Pancreas (tissue), 10 donors: ENCODE measurements at regions of chr18 and their contacts with region 1.

Region 1: DNA sequence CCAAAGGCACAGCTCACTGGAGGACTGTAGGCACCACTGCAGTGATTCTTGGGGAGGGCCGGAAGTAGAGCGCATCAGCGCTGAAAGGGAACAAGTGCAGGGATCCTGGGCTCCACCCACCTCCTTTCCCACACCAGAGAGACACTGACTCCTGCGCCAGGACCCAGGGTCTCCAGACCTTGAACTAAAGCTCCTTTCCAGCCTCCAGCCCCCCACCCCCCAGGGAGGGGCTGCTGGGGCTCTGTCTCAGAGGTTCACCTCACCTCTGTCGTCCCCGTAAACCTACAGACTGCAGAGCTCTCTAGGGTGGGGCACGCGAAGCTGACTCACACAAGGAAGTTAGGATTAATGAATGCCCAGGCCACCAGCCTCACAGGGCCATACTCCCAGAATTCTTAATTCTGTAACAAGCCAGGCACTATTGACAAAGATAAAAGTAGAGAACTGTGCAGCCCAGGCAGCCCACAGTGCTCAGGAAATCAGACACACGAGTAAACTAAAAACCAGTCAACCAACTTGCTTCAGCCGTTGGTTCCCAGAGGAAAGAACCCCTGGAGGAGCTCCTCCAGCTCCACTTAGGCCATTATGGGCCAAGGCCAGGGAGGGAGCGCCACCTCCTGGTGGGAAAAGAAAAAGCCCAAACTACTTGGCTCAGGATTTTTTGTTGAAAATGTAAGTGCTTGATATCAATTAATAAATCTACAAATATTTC is 45.1 kb upstream of the ACAA2 start:
- DNase-seq: peak; percentile 64 to 83 (median 72)
- ATAC-seq: peak; percentile 76 to 88 (median 87)
- H3K4me3 ChIP-seq: peak overlapping the region in 1 of 4 donors; percentile 0
- H3K27ac ChIP-seq: peak overlapping the region; percentile 56 to 84 (median 74)
- H3K4me1 ChIP-seq: peaks cover 13 to 23% (median 15%) of the 10 kb centered on the region in 3 donors
- H3K27me3 ChIP-seq: no peaks in the 10 kb centered on the region
- CTCF ChIP-seq: peak; percentile 71 to 85 (median 80)

Region 2: DNA sequence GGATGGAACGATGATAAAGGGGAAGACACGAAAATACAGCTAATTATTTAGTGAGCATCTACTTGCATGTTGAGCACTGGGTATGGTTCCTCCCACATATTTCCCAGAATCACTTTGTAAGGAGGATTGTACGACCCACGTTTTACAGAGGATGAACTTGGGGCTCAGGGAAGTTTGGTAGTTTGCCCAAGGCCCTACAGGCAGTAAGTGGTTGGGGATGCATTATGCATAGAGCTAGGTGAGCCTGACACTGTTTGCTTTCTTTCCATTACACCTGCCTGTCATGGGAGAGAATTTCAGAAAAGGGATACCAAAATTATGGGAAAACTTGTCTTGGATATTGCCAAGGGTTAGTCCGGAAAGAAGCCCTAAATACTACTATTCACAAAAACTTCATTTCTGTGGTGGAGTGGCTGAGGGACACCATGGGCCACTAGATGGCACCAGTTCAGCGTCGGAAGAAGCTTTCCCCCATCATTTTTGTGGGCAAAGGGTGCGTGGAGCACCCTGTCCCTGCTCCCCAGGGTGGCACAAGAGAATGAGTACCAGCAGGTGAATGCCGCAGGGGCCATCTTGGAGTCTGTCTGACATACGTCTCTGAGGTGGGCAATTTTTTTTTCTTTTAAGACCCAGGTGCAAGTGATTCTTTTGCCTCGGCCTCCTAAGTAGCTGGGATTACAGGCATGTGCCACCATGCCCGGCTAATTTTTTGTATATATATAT is 347.9 kb before region 1 on chr18:
- intact Hi-C with region 1: loop called in 2 of 3 experiments (anchors 5 to 10 kb)
- DNase-seq: peak in 3 of 6 donors; percentile 29 to 53 (median 33)
- ATAC-seq: peak; percentile 46 to 89 (median 85)
- H3K4me3 ChIP-seq: no peak overlapping the region
- H3K27ac ChIP-seq: no peak overlapping the region
- H3K4me1 ChIP-seq: no peaks in the 10 kb centered on the region
- H3K27me3 ChIP-seq: no peaks in the 10 kb centered on the region
- CTCF ChIP-seq: peak; percentile 47 to 80 (median 70)

Region 3: GRCh38 chr18:49555641-49556040 is 302.8 kb before region 1 on chr18:
- intact Hi-C with region 1: loop called in 2 of 3 experiments (anchors 5 to 10 kb)
- DNase-seq: no peak
- ATAC-seq: no peak
- H3K4me3 ChIP-seq: no peak overlapping the region
- H3K27ac ChIP-seq: no peak overlapping the region
- H3K4me1 ChIP-seq: peaks cover 0 to 8% (median 0%) of the 10 kb centered on the region in 3 donors
- H3K27me3 ChIP-seq: no peaks in the 10 kb centered on the region
- CTCF ChIP-seq: no peak

Region 4: DNA sequence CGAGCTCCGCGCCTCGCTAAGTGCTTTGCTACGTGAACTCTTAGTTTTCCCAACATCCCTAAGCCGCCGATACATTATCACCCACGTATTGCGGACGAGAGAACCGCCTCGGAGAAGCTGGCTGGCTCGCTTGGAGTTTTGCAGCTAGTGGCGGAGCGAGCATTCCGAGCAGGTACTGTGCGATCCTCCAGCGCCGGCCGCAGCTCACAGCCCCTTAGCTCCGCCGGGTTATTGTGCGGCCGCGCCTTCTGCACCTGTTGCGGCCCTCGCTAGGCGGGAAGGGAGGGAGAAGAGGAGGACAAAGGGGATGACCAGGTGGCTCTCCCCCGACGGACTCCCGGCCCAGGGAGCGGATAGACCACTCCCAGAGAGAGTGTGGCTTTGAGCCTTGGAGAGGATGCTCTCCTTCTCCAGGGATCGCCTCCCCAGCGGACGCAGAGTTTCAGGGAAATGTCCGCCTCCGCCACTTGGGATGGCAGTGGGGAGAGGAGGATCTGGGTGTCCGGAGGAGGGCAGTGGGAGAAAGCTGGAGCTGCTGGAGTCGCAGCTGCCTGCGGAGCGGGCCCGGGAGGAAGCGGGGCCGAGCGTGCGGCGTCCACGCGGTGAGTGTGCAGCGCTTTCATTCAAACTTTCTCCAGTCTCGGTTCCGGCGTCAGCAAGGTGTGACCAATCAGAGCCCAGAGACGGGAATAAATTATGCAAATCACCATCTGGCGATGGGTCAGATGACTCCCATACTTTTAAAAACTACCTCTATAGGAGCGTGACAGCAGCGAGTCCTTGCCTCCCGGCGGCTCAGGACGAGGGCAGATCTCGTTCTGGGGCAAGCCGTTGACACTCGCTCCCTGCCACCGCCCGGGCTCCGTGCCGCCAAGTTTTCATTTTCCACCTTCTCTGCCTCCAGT is 296.9 kb before region 1 on chr18 and contains the start of gene LIPG:
- intact Hi-C with region 1: loop called in 2 of 3 experiments (anchors 5 to 10 kb)
- DNase-seq: peak; percentile 17 to 69 (median 40)
- ATAC-seq: peak; percentile 38 to 75 (median 66)
- H3K4me3 ChIP-seq: peak within 1 kb of the TSS; percentile 4 to 45 (median 26)
- H3K27ac ChIP-seq: no peak within 1 kb of the TSS
- H3K4me1 ChIP-seq: peaks cover 0 to 24% (median 0%) of the 10 kb centered on the region in 3 donors
- H3K27me3 ChIP-seq: peaks cover 0 to 3% (median 0%) of the 10 kb centered on the region in 4 donors
- CTCF ChIP-seq: no peak
- total RNA-seq, gene LIPG: 0.39 to 8.2 (median 1.2) TPM

Region 5: GRCh38 chr18:49597157-49597931 is 261.1 kb before region 1 on chr18:
- intact Hi-C with region 1: no loop called
- DNase-seq: no peak
- ATAC-seq: peak in 2 of 4 donors; percentile 56 to 62
- H3K4me3 ChIP-seq: no peak overlapping the region
- H3K27ac ChIP-seq: no peak overlapping the region
- H3K4me1 ChIP-seq: peaks cover 0 to 2% (median 0%) of the 10 kb centered on the region in 3 donors
- H3K27me3 ChIP-seq: no peaks in the 10 kb centered on the region
- CTCF ChIP-seq: no peak